Vagina (tissue), 2 donors: ENCODE measurements at regions of chr6 and their contacts with region 1.

Region 1: DNA sequence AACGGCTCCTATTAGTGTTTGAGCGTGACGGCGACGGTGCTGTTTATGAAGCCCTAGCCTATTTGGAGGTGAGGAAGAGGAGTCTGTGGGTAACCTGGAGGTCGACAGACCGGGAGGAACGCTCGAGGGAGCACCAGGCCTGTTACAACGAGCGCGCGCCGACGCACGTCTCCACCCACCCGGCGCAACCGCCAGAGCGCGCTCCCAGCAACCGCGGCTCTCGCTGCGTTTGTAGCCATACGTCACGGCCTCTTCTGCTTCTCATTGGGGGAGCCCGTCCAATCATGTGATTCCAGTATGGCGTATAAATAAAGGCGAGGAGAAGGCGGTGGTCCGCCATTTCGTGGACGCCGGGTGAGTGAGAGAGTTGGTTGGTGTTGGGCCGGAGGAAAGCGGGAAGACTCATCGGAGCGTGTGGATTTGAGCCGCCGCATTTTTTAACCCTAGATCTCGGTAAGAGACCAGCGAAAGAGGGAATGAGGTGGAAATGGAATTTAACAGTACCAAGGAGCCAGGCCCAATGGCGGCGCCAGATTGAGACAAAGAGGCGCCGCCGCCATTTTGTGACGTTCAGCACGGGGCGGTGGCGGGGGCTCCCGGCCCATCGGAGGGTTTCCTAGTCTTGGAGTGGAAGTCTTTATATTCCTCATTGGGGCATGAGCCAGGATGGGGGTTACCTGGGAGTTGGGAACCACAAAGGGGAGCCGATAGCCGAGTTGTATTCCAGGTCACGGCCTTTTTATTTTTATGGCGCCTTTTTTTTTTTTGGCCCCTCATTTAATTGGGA is at the start of gene SRSF3:
- DNase-seq: peak; percentile 97 to 99
- H3K4me3 ChIP-seq: peak within 1 kb of the TSS; percentile 51 to 72
- H3K27ac ChIP-seq: peak within 1 kb of the TSS; percentile 100
- H3K4me1 ChIP-seq: peaks cover 40% of the 10 kb centered on the region
- H3K27me3 ChIP-seq: no peaks in the 10 kb centered on the region
- CTCF ChIP-seq: peak in 2 of 3 experiments; percentile 40 to 51
- POLR2A ChIP-seq: peak; percentile 59 to 99
- total RNA-seq, gene SRSF3: 144 TPM

Region 2: DNA sequence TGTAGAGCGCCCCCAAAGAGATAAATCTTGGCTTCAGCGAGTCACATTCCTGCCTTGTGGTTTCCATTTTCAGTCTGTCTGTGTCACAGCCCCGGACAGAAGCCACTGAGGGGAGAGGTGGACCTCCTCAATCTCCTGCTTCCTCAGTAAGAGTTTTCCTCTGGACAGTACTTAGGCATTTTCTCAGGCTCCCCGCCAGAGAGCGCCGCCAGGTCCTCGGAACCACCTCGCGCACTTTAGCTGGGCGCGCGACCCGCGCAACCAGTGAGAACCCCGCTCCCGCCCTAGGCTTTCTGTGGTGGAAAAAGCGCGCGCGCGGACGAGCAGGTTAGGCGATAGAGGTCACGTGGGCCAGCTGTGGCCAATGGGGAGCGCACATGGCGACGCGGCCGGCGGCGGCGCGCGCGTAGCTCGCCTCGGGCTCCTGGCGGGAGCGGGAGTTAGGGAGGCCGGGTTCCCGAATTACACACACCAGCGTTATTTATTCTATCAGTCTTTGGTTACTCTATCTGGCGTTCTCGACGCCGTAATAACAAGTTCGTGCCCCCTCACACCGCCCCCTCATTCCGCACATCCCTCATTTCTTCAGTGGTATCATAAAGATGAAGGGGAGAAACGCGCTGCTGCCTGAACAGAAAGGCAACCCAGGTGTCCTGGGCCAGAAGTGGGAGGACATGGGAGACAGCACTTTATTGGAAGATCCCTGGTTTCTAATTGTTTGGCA is 171.0 kb before region 1 on chr6:
- intact Hi-C with region 1: loop called (anchors 10 kb)
- DNase-seq: peak in 1 of 2 donors; percentile 95
- H3K4me3 ChIP-seq: peak overlapping the region; percentile 50 to 56
- H3K27ac ChIP-seq: peak overlapping the region; percentile 81
- H3K4me1 ChIP-seq: peaks cover 5% of the 10 kb centered on the region
- H3K27me3 ChIP-seq: no peaks in the 10 kb centered on the region
- CTCF ChIP-seq: peak in 2 of 3 experiments; percentile 36 to 48
- POLR2A ChIP-seq: peak in 1 of 2 donors; percentile 18

Region 3: DNA sequence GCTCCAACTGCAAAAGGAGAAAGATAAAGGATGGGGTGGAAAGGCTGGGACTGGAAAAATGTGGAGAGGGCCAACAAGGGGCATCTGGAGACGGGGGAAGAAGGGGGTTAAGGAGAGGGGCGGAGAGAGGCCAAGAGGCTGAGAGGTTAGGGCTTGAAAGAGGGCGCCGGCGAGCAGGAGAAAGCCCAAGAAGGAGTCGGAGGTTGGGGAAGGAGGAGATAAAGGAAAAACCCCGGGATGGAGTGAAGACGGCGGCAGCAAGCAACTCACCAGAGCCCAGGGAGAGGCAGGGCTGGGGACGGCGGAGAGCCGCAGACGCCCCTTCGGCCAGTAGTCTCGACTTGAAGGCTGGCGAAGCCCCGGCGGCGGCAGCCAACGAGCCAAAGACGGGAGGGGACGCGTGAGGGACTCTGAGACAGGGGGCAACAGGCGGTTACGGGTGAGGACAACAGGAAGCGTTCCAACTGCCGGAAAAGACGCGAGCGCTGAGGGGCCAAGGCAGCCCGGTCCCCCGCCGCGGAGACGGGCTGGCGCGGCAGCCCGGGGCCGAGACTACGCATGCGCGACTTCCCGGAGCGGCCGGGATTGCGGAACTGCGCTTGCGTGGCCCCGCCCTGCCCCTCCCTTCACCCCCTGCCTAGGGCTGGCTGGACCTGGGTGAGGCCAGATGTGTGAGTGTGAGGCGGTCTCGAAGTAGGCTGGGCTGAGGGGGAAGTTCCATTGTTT is 47.1 kb before region 1 on chr6 and contains the start of gene STK38:
- intact Hi-C with region 1: loop called (anchors 5 kb)
- DNase-seq: peak; percentile 95 to 97
- H3K4me3 ChIP-seq: peak within 1 kb of the TSS; percentile 86 to 93
- H3K27ac ChIP-seq: peak within 1 kb of the TSS; percentile 99
- H3K4me1 ChIP-seq: peaks cover 36% of the 10 kb centered on the region
- H3K27me3 ChIP-seq: no peaks in the 10 kb centered on the region
- CTCF ChIP-seq: no peak
- POLR2A ChIP-seq: peak; percentile 90 to 98
- total RNA-seq, gene STK38: 31.9 TPM